CD4-positive, alpha-beta T cell (primary cell): ENCODE measurements at regions of chr6 and their contacts with region 1.

Region 1: DNA sequence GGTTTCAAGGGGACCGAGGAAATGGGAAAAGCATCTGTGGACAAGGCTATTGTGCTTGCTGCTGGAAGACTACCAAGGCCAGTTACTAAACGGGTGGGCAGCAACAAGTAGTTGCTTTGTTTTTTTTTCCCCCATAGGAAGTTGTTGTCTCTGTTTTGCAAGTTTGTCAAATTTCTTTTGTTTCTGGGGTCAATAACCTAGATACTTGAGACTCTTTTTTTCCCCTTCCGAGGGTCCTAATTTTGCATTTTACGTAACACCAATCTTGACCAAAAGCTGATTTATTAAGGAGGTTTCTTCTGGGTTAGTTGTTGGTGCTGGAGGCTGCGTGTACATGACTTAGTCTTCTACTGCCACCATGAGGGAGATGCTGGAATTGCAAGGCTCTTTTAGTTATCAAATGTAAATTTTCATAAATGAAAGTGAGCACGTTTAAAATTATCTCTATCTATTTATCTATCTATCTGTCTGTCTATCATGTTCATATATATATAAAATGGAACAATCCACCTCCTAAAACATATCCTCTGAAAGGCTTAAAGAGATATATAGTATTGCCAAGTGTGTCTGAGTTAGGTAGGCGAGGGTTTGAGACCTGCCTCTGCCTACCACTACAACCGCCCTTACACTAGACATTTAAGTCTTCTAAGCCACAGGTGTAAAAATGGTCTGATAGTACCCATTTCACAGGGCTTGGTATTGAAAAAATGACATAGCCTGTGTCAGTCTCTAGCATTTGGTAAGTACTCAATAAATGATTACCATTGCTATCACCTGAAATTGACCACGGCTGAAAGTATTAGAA is 60.2 kb downstream of the GCLC start:
- DNase-seq: peak; percentile 21 to 85 (median 65)
- ATAC-seq: peak; percentile 65
- H3K4me3 ChIP-seq: no peak overlapping the region
- H3K4me3 Mint-ChIP-seq: no peak overlapping the region
- H3K27ac ChIP-seq: no peak overlapping the region
- H3K27ac Mint-ChIP-seq: no peak overlapping the region
- H3K4me1 ChIP-seq: no peaks in the 10 kb centered on the region
- H3K4me1 Mint-ChIP-seq: peaks cover 14% of the 10 kb centered on the region
- H3K27me3 ChIP-seq: peaks cover 6 to 8% of the 10 kb centered on the region in 2 experiments
- H3K27me3 Mint-ChIP-seq: peaks cover 32% of the 10 kb centered on the region
- CTCF ChIP-seq: peak; percentile 99

Region 2: DNA sequence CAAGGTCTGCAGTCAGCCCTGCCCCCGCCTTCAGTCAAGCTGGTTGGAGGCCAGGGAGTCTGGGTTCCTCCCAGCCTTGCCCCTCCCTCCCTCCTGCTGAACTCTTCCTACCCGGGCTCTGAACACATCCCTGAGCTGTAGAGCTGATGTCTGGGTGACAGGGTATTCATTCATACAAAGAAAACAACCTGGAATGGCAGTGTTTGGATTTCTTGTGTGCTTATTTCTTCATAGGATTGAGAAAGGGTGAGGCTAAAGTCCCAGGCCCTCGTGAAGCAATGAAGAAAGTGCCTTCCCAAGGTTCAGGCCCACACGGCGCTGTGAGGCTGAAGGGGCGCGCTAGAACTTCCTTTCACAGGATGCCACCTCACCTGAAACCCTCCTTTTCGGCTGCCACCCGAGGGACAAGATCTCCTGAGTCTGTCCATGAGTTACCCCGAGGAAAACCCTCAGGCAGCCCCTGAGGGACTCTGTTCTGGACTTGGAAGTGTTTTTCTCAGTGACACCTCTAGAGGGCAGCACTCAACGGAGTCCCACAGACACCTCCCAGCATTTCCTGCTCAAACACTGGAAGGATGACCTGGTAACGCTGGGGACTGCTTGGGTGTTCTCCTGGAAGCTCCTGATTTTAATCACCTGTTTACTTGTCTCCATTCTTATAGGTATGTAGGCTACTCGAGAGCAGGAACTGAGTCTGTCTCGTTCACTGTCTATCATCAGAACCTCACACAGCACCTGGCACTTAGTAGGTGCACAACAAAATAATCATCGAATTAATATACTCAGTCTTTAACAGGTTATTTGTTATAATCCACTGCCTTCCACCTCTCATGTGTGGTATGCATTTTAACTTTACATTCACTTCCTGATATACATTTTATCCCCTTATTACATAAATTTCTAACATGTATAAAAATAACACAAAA is 669.2 kb before region 1 on chr6:
- CTCF ChIA-PET with region 1: no interaction called
- POLR2A ChIA-PET with region 1: no interaction called
- intact Hi-C with region 1: loop called in 1 of 2 experiments (anchors 10 kb)
- DNase-seq: peak in 10 of 14 experiments; percentile 9 to 55 (median 16)
- ATAC-seq: peak; percentile 69
- H3K4me3 ChIP-seq: no peak overlapping the region
- H3K4me3 Mint-ChIP-seq: no peak overlapping the region
- H3K27ac ChIP-seq: no peak overlapping the region
- H3K27ac Mint-ChIP-seq: no peak overlapping the region
- H3K4me1 ChIP-seq: peaks cover 4% of the 10 kb centered on the region
- H3K4me1 Mint-ChIP-seq: no peaks in the 10 kb centered on the region
- H3K27me3 ChIP-seq: peaks cover 0 to 2% of the 10 kb centered on the region in 2 experiments
- H3K27me3 Mint-ChIP-seq: peaks cover 14% of the 10 kb centered on the region
- CTCF ChIP-seq: peak; percentile 64

Region 3: GRCh38 chr6:53273370-53273769 is 211.3 kb before region 1 on chr6:
- CTCF ChIA-PET with region 1: no interaction called
- POLR2A ChIA-PET with region 1: no interaction called
- intact Hi-C with region 1: loop called in 1 of 2 experiments (anchors 10 kb)
- DNase-seq: peak in 1 of 14 experiments; percentile 12
- ATAC-seq: no peak
- H3K4me3 ChIP-seq: no peak overlapping the region
- H3K4me3 Mint-ChIP-seq: no peak overlapping the region
- H3K27ac ChIP-seq: no peak overlapping the region
- H3K27ac Mint-ChIP-seq: no peak overlapping the region
- H3K4me1 ChIP-seq: no peaks in the 10 kb centered on the region
- H3K4me1 Mint-ChIP-seq: peaks cover 12% of the 10 kb centered on the region
- H3K27me3 ChIP-seq: no peaks in the 10 kb centered on the region
- H3K27me3 Mint-ChIP-seq: no peaks in the 10 kb centered on the region
- CTCF ChIP-seq: no peak

Region 4: DNA sequence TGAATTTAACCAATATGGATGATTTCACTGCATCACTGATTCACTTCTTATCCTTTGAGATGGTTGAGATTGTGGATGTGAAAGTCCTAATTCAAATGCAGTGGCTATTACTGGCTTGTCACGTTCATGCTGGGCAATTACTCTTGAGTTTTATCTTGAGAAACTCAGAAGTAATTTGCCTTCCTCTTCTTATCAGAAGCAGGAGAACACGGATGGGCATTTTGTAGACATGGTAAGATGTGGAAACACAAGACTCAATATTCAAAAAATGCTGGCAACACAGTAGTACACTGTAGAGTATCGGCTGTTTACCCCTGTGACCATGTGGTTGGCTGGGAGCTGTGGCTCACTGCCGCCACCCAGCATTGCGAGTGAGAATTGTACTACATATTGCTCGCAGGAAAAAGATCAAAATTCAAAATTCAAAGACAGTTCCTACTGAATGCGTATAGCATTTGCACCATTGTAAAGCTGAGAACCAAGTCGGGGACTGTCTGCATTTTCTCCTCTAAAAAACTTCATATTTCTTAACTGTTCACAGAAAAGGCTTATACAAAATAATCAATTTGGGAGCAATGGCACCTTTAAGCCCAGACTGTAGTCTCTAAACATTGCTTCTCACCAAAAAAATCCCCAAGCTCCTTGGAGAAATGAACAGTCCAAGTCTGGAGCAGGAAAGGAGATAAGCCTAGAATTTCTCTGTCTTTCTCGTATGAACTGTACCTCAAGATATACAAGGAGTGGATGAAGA is 74.0 kb before region 1 on chr6:
- CTCF ChIA-PET with region 1: interaction called, 5 read pairs
- POLR2A ChIA-PET with region 1: no interaction called
- intact Hi-C with region 1: loop called (anchors 1 to 2 kb)
- DNase-seq: peak; percentile 40 to 83 (median 60)
- ATAC-seq: peak; percentile 100
- H3K4me3 ChIP-seq: no peak overlapping the region
- H3K4me3 Mint-ChIP-seq: no peak overlapping the region
- H3K27ac ChIP-seq: no peak overlapping the region
- H3K27ac Mint-ChIP-seq: no peak overlapping the region
- H3K4me1 ChIP-seq: peaks cover 3% of the 10 kb centered on the region
- H3K4me1 Mint-ChIP-seq: peaks cover 5% of the 10 kb centered on the region
- H3K27me3 ChIP-seq: no peaks in the 10 kb centered on the region
- H3K27me3 Mint-ChIP-seq: peaks cover 4% of the 10 kb centered on the region
- CTCF ChIP-seq: peak; percentile 85